ENCODE measurements at regions of chr15 and their contacts with region 1.

Region 1: GRCh38 chr15:85296615-85297402 is 83.6 kb upstream of the AKAP13 start:
- DNase-seq: peak; percentile 48 to 84 (median 67)
- ATAC-seq: peak; percentile 99
- H3K4me3 ChIP-seq: no peak overlapping the region
- H3K4me3 Mint-ChIP-seq: peak overlapping the region; percentile 59
- H3K27ac ChIP-seq: no peak overlapping the region
- H3K27ac Mint-ChIP-seq: no peak overlapping the region
- H3K4me1 ChIP-seq: no peaks in the 10 kb centered on the region
- H3K4me1 Mint-ChIP-seq: peaks cover 10% of the 10 kb centered on the region
- H3K27me3 ChIP-seq: no peaks in the 10 kb centered on the region
- H3K27me3 Mint-ChIP-seq: peaks cover under 1% of the 10 kb centered on the region
- CTCF ChIP-seq: peak; percentile 74

Region 2: GRCh38 chr15:85318048-85318731 is 21.4 kb after region 1 on chr15:
- CTCF ChIA-PET with region 1: interaction called, 14 read pairs
- POLR2A ChIA-PET with region 1: no interaction called
- intact Hi-C with region 1: no loop called
- DNase-seq: peak in 3 of 9 experiments; percentile 14 to 45 (median 38)
- ATAC-seq: peak; percentile 77
- H3K4me3 ChIP-seq: no peak overlapping the region
- H3K4me3 Mint-ChIP-seq: no peak overlapping the region
- H3K27ac ChIP-seq: no peak overlapping the region
- H3K27ac Mint-ChIP-seq: peak overlapping the region; percentile 53
- H3K4me1 ChIP-seq: peaks cover 24% of the 10 kb centered on the region
- H3K4me1 Mint-ChIP-seq: peaks cover 31% of the 10 kb centered on the region
- H3K27me3 ChIP-seq: no peaks in the 10 kb centered on the region
- H3K27me3 Mint-ChIP-seq: no peaks in the 10 kb centered on the region
- CTCF ChIP-seq: no peak

Region 3: DNA sequence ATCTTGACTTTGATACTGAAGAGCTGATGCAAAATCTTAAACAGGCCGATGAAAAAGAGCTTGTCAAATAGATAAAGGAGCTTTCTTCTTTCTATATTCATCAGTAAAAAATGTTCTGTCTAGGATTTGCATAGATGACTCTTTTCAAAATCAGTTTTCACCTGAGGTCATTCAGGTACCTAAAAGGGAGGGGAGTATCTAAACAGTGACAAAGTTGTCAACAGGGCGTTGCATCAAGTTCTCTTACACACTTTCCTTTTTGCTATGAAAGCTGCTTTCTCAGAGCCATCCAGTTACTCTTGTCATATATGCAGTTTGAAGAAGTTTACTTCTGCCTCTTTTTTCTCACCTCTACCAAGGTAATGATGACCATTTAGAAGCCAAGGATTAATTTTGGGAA is 143.6 kb after region 1 on chr15:
- CTCF ChIA-PET with region 1: interaction called, 10 read pairs
- POLR2A ChIA-PET with region 1: no interaction called
- intact Hi-C with region 1: no loop called
- DNase-seq: peak in 1 of 9 experiments; percentile 17
- ATAC-seq: peak; percentile 19
- H3K4me3 ChIP-seq: no peak overlapping the region
- H3K4me3 Mint-ChIP-seq: no peak overlapping the region
- H3K27ac ChIP-seq: no peak overlapping the region
- H3K27ac Mint-ChIP-seq: peak overlapping the region; percentile 66
- H3K4me1 ChIP-seq: peaks cover 45% of the 10 kb centered on the region
- H3K4me1 Mint-ChIP-seq: peaks cover 49% of the 10 kb centered on the region
- H3K27me3 ChIP-seq: no peaks in the 10 kb centered on the region
- H3K27me3 Mint-ChIP-seq: no peaks in the 10 kb centered on the region
- CTCF ChIP-seq: no peak

Region 4: DNA sequence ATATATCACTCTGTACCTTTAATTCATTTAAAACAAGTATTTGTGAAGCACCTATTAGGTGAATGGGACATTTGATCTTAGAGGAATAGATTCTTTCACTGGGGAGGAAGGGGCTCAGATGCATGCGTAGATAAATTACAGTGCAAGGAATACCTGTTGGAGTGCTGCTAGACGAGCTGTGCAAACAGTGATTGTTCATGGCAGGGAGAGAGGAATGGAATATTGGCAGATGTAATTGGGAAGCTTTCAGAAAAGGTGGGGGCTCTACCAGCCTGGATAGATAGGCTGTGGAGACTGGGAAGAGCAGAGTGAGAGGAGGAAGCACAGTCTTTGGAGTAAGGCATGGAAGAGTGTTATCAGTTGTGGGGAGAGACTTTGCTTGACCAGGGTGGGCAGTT is 200.4 kb after region 1 on chr15:
- CTCF ChIA-PET with region 1: interaction called, 10 read pairs
- POLR2A ChIA-PET with region 1: no interaction called
- intact Hi-C with region 1: no loop called
- DNase-seq: no peak
- ATAC-seq: no peak
- H3K4me3 ChIP-seq: no peak overlapping the region
- H3K4me3 Mint-ChIP-seq: no peak overlapping the region
- H3K27ac ChIP-seq: no peak overlapping the region
- H3K27ac Mint-ChIP-seq: no peak overlapping the region
- H3K4me1 ChIP-seq: peaks cover 47% of the 10 kb centered on the region
- H3K4me1 Mint-ChIP-seq: peaks cover 85% of the 10 kb centered on the region
- H3K27me3 ChIP-seq: no peaks in the 10 kb centered on the region
- H3K27me3 Mint-ChIP-seq: no peaks in the 10 kb centered on the region
- CTCF ChIP-seq: no peak

Region 5: GRCh38 chr15:85597155-85597815 is 300.5 kb after region 1 on chr15:
- CTCF ChIA-PET with region 1: no interaction called
- POLR2A ChIA-PET with region 1: no interaction called
- intact Hi-C with region 1: no loop called
- DNase-seq: peak in 4 of 9 experiments; percentile 24 to 66 (median 32)
- ATAC-seq: peak; percentile 87
- H3K4me3 ChIP-seq: no peak overlapping the region
- H3K4me3 Mint-ChIP-seq: peak overlapping the region; percentile 30
- H3K27ac ChIP-seq: no peak overlapping the region
- H3K27ac Mint-ChIP-seq: peak overlapping the region; percentile 49
- H3K4me1 ChIP-seq: peaks cover 18% of the 10 kb centered on the region
- H3K4me1 Mint-ChIP-seq: peaks cover 50% of the 10 kb centered on the region
- H3K27me3 ChIP-seq: no peaks in the 10 kb centered on the region
- H3K27me3 Mint-ChIP-seq: no peaks in the 10 kb centered on the region
- CTCF ChIP-seq: no peak

Region 6: DNA sequence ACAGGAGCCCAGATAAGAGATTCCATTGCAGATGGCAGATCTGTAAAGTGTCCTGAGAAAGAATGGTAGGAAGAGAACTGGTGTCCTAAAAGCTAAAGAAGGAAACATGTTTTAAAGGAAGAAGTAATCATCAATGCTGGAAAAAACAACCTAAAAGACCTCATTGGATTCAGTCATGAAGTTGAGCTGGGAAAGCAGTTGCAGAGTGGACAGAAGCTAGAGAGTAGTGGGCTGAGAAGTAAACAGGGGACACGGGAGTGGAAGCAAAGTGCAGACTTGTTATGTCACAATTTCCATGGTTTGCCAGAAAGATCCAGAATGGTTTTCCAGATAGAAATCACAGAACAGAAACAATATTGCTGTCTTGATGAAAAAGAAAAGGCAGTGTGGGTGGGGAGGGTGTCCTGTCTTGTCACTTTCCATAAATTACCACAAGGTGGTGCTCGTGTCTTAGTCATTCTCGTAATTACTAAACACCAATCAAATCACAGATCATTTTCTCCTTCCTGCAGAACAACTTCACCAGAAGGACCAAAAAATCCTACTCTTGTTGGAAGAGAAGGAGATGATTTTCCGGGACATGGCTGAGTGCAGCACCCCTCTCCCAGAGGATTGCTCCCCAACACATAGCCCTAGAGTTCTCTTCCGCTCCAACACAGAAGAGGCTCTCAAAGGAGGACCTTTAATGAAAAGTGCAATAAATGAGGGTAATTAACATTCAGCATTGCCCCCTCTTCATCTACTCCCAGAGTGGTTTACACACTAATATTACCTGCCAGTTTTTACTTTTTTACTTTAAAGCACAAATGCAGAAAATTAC is 433.4 kb after region 1 on chr15:
- CTCF ChIA-PET with region 1: no interaction called
- POLR2A ChIA-PET with region 1: no interaction called
- intact Hi-C with region 1: loop called in 1 of 2 experiments (anchors 5 kb)
- DNase-seq: peak in 4 of 9 experiments; percentile 30 to 80 (median 64)
- ATAC-seq: peak; percentile 93
- H3K4me3 ChIP-seq: no peak overlapping the region
- H3K4me3 Mint-ChIP-seq: no peak overlapping the region
- H3K27ac ChIP-seq: no peak overlapping the region
- H3K27ac Mint-ChIP-seq: peak overlapping the region; percentile 34
- H3K4me1 ChIP-seq: no peaks in the 10 kb centered on the region
- H3K4me1 Mint-ChIP-seq: peaks cover 8% of the 10 kb centered on the region
- H3K27me3 ChIP-seq: no peaks in the 10 kb centered on the region
- H3K27me3 Mint-ChIP-seq: no peaks in the 10 kb centered on the region
- CTCF ChIP-seq: peak; percentile 81

Measured in CD8-positive, alpha-beta T cell (primary cell).